Heart right ventricle (tissue), 16 donors: ENCODE measurements at regions of chr12 and their contacts with region 1.

Region 1: DNA sequence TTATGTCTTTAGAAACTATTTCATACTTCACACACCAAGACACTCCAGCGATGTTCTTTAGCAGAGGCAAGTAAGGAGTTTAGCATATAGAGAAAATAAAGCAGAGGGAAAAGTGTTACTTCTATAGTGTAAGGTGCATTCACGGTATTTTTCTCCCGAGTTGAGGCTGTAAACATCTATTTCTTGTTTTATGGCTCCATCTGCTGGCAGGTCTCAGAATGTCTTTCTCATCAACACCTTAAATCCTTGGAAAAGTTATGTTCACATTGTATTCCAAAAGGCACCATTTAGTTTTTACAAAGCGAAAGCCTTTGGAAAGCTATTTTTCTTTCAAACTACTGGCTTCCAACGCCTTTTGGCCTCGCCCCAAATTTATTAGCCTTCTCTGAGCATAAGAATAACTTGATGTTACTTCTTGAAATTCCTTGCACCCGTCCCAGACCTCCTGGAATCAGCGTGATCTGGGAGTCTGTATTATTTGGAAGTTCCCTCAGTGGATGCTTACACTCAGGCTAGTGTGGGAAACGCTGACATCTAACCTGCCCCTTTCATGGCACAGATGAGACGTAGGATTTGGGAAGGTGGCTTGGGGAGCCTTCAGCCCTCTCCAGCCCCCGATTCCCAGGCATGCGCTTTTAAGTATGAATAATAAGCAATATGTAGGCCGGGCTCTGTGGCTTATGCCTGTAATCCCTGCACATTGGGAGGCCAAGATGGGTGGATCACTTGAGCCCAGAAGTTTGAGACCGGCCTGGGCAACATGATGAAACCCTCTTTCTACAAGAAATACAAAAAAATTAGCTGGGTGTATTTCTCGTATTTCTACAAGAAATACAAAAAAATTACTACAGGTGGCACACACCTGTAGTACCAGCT is 1.9 kb upstream of the PIWIL1 start:
- DNase-seq: peak in 1 of 2 donors; percentile 46
- ATAC-seq: peak in 1 of 8 donors; percentile 68
- H3K4me3 ChIP-seq: no peak overlapping the region
- H3K27ac ChIP-seq: no peak overlapping the region
- H3K4me1 ChIP-seq: peaks cover 0 to 7% (median 0%) of the 10 kb centered on the region in 9 donors
- H3K27me3 ChIP-seq: peaks cover 5 to 68% (median 31%) of the 10 kb centered on the region in 7 donors
- CTCF ChIP-seq: peak; percentile 48 to 82 (median 72)

Region 2: GRCh38 chr12:130053651-130054069 is 282.1 kb before region 1 on chr12:
- intact Hi-C with region 1: loop called in 5 of 10 experiments (anchors 2 to 5 kb)
- DNase-seq: no peak
- ATAC-seq: no peak
- H3K4me3 ChIP-seq: no peak overlapping the region
- H3K27ac ChIP-seq: no peak overlapping the region
- H3K4me1 ChIP-seq: no peaks in the 10 kb centered on the region
- H3K27me3 ChIP-seq: peaks cover 0 to 45% (median 26%) of the 10 kb centered on the region in 7 donors
- CTCF ChIP-seq: no peak